Posterior vena cava (tissue), 2 donors: ENCODE measurements at regions of chr4 and their contacts with region 1.

Region 1: DNA sequence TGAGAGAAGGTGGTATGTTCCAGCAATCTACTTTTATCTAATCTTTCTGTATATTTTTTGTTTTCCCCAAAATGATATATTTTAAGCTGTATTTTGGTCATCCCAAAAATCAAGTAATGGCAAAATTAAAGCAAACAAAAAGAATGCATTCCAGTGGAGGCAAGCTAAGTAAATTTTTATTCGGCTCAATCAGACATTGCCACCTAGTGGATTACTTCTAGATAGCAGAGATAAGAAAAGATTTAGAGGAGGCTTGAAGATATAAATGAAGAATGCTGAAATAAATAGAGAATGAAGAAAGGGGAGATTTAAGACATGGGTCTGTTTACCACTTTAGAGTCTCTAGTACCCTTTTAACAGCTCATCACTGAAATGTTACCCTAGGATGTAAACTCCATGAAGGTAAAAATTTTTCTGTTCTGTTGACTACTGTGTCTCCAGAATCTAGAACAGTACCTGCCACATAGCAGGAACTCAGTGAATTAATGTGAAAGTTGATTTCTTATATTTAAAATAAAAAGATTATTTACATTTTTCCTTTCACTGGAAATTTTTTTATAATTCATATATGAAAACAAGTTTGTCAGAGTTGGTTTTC is 110.9 kb upstream of the ANK2 start:
- DNase-seq: no peak

Region 2: GRCh38 chr4:112751447-112751846 is 187.1 kb before region 1 on chr4:
- intact Hi-C with region 1: loop called in 1 of 2 experiments (anchors 10 kb)
- DNase-seq: no peak

Region 3: DNA sequence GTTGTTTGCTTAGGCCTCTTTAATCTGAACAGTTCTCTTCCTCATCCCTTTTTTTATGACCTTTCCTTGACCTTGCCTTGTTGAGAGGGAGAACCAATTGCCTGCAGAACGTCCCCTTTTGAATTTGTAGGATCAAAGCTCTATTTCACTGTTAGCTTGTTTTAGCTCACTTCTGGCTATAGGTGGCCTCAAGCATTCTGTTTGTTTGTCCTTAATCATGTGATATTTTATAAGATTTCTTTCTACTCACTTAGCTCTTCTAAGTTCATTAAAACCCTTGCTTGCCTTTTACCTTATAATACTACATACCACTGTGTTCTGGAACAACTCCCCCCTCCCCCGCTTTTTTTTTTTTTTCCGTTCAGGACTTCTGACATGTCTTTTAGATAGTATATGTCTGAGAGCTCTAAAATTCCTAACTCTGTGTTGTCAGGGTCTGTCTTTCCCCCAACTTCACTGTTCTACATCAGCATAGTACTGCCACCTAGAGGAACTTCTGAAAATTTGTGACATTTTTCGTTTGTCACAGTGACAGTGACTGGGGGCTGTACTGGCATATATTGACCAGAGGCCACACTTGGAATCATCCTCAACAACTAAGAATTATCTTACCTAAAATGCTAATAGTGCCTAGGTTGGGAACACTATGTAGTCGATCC is 173.1 kb before region 1 on chr4:
- intact Hi-C with region 1: loop called in 1 of 2 experiments (anchors 5 kb)
- DNase-seq: no peak